Right ventricle myocardium inferior (tissue), 1 donor: ENCODE measurements at regions of chr18 and their contacts with region 1.

Region 1: GRCh38 chr18:50203801-50204604 is 9.1 kb upstream of the MYO5B start:
- DNase-seq: no peak
- ATAC-seq: no peak

Region 2: DNA sequence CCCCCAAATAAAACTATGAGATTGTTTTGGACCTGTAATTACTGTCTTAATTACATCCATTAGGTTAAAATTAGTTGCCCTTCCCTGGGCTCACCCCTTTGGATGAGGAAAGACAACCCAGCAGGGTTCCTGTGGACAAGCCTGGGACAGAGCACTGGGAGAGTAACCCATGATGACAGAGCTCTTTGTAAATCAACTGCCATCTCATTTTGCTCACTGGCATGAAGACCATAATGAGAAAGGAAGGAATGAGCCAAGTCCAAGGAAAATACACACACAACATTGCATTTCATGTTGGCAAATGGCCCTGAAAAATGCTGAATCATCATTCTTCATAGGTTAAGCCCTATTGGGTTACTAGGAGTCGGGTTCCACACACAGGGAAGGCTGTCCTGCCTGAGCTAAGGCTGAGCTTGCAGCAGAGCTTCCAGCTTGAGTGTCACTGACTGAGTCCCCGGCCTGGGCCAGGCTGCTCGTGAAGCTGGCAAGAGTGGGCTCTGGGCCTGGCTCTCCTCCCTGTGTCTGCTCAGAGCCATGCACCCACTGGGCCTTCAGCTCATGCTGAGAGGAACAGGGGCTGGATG is 296.6 kb before region 1 on chr18:
- intact Hi-C with region 1: no loop called
- DNase-seq: no peak
- ATAC-seq: no peak

Region 3: DNA sequence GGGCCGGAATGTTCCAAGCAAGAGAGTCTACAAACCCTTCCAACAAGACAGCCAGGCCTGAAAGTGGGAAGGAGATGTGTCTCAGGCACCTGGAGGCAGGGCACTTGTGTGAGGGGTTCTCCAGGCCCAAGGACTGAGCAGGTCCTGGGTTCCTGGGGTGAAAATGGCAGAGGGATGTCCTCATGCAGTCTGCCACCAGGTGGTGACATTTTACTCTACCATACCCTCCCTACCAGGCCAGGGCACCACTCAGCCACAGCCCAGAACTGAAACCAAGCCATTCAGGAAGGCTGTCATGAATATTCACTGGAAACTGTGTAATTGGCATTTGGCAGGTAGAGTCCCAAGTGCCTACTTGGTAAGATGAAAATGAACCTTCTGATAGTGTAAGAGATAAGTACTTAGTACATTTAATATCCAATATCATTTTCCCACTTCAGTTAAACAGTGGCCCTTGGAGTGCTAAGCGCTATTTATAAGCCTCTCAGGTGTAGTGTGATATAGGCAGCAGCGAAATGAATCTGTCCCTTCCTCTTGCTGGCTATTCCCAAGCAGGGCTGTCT is 194.1 kb before region 1 on chr18:
- intact Hi-C with region 1: loop called (anchors 5 kb)
- DNase-seq: no peak
- ATAC-seq: peak; percentile 62